ENCODE measurements at regions of chr17 and their contacts with region 1.

Region 1: DNA sequence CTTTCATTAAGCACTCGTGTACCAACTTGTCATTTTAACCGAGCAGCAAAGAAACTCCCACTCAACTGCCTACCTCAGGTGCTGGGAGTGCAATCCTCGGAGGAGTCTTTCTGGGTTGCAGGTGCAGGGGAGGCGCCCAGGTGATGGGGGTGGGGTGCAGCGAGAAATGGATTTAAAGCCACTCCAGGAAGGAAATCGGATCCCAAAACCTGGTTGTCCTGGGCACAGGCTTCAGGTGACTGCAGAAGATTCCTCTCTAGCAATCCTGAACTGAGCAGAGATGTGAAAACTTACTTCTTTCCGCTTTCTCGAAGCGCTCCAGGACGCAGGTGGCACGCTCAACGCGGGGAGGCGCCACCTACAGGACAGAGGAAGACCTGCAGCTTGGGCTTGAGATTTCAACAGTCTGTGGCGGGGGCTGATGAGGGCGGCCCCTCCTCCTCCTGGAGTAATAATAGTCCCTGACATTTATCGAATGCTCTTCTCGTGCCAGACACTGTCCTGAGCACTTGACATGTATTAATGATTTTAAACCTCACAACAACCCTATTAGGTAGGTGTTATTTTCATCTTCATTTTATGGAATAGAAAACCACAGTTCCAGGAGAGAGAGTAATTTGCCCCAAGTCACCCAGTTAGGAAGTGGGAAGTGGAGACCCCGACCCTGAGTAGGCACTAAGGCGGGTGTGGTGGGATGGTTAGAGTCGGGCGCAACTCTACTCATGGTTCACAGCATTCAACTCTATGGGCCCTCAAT is 27.2 kb upstream of the SKAP1 start:
- DNase-seq: peak; percentile 69
- H3K4me3 Mint-ChIP-seq: peak overlapping the region; percentile 28
- H3K27ac Mint-ChIP-seq: peak overlapping the region; percentile 11
- H3K4me1 Mint-ChIP-seq: peaks cover 69% of the 10 kb centered on the region
- H3K27me3 Mint-ChIP-seq: no peaks in the 10 kb centered on the region

Region 2: DNA sequence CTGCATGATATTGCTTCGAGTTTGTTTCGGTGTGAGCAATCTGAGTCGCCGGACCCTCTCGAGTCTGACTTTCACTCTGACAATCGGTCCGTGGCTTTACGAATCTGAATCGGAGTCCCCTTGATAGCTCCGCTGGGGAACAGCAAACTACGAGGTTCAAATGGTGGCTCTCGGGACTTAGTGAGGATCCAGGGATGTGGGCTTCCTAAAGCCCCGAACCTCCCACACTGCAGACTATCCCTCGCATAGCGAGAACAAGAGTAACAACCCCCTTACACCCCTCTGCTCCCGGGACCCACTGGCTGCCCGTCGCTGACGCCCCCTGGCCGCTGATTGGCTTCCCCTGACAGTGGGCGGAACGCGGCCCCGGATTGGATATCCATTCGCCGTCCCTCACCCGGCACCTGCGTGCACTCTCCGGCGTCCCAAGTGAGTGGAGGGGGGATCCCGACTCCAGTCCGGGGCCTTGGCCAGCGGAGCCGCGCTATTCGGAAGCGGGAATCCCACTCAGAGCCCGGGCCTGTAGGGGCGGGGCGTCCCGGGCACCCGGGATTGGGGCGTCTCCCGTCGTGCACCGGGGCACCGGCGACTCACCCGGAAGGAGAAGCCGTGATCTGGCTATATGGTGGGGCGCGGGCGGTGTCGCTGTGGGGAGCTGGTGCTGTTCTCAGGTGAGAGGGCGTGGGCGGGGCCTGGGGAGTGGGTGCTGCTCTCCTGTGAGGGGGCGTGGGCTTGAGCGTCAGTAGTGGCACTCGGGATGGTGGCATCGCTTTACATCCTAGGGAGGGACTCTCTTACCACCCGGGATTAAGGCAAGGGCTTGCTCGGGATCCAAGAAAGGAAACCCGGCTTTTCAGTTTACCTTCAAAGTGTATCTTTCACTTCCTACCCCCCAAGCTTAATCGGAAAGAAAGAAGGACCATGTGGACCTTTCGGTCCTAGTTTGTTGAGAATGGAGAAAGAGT is 349.8 kb before region 1 on chr17 and contains the start of gene SNX11:
- intact Hi-C with region 1: loop called (anchors 10 kb)
- DNase-seq: peak; percentile 91
- H3K4me3 Mint-ChIP-seq: peak within 1 kb of the TSS; percentile 100
- H3K27ac Mint-ChIP-seq: peak within 1 kb of the TSS; percentile 99
- H3K4me1 Mint-ChIP-seq: peaks cover 63% of the 10 kb centered on the region
- H3K27me3 Mint-ChIP-seq: no peaks in the 10 kb centered on the region
- total RNA-seq, gene SNX11: 31.1 and 37.1 TPM in 2 replicates

Region 3: GRCh38 chr17:48330386-48330785 is 126.9 kb before region 1 on chr17:
- intact Hi-C with region 1: no loop called
- DNase-seq: no peak
- H3K4me3 Mint-ChIP-seq: no peak overlapping the region
- H3K27ac Mint-ChIP-seq: no peak overlapping the region
- H3K4me1 Mint-ChIP-seq: peaks cover 23% of the 10 kb centered on the region
- H3K27me3 Mint-ChIP-seq: no peaks in the 10 kb centered on the region

Region 4: GRCh38 chr17:48351831-48352332 is 105.4 kb before region 1 on chr17:
- intact Hi-C with region 1: loop called (anchors 1 kb)
- DNase-seq: no peak
- H3K4me3 Mint-ChIP-seq: no peak overlapping the region
- H3K27ac Mint-ChIP-seq: no peak overlapping the region
- H3K4me1 Mint-ChIP-seq: peaks cover 7% of the 10 kb centered on the region
- H3K27me3 Mint-ChIP-seq: no peaks in the 10 kb centered on the region

Region 5: GRCh38 chr17:48429638-48430586 is 27.3 kb before region 1 on chr17 and contains the start of gene SKAP1:
- intact Hi-C with region 1: loop called (anchors 1 kb)
- DNase-seq: peak; percentile 68
- H3K4me3 Mint-ChIP-seq: peak within 1 kb of the TSS; percentile 98
- H3K27ac Mint-ChIP-seq: peak within 1 kb of the TSS; percentile 99
- H3K4me1 Mint-ChIP-seq: peaks cover 72% of the 10 kb centered on the region
- H3K27me3 Mint-ChIP-seq: peaks cover 1% of the 10 kb centered on the region
- total RNA-seq, gene SKAP1: 48.7 and 51.9 TPM in 2 replicates

Region 6: GRCh38 chr17:48483471-48484131 is 26.3 kb after region 1 on chr17:
- intact Hi-C with region 1: loop called (anchors 2 kb)
- DNase-seq: peak; percentile 40
- H3K4me3 Mint-ChIP-seq: peak overlapping the region; percentile 37
- H3K27ac Mint-ChIP-seq: peak overlapping the region; percentile 70
- H3K4me1 Mint-ChIP-seq: peaks cover 46% of the 10 kb centered on the region
- H3K27me3 Mint-ChIP-seq: no peaks in the 10 kb centered on the region

Region 7: DNA sequence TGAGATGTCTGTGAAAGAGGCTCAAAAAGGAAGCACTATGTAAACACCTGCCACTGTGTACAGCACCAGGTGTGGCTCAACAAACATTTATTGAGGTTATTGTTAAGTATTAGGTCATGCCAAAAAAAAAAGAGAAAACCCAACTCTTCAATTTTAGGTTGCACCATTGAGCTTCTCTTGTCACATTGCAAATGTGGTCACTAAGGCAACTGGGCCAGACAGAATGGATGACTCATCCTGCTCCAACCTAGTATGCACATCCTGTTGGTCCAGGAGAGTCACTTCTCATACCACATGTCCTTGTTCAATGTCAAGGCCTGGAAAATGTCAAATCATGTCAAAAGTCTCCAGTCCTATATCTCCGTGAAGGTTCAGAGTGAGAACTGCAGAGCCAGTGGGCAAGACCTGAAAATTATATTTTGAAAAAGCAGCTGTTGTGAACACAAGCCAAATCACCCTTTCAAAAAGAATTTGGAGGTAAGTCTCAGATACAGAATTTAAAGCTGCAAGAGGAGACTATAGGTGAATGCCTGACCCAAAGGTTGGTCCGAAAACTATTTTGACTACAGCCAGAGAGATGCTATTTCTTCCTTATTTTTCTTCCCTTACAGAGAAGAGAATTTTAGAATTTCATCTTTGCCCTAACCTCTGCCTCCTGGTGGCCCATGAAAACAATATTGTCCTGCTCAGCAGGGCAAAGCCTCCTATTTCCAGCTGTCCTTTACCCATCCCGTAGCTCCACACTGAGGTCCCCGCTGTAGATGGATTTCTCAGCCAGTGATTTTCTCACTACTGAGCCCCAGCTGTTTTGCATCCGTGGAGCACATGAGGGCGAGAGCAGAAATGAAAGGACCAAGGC is 48.8 kb after region 1 on chr17:
- intact Hi-C with region 1: loop called (anchors 2 kb)
- DNase-seq: peak; percentile 70
- H3K4me3 Mint-ChIP-seq: peak overlapping the region; percentile 60
- H3K27ac Mint-ChIP-seq: peak overlapping the region; percentile 84
- H3K4me1 Mint-ChIP-seq: peaks cover 49% of the 10 kb centered on the region
- H3K27me3 Mint-ChIP-seq: peaks cover 8% of the 10 kb centered on the region

Region 8: GRCh38 chr17:48830840-48831548 is 373.7 kb after region 1 on chr17 and contains the start of gene CALCOCO2:
- intact Hi-C with region 1: no loop called
- DNase-seq: peak; percentile 85
- H3K4me3 Mint-ChIP-seq: peak within 1 kb of the TSS; percentile 93
- H3K27ac Mint-ChIP-seq: peak within 1 kb of the TSS; percentile 97
- H3K4me1 Mint-ChIP-seq: peaks cover 50% of the 10 kb centered on the region
- H3K27me3 Mint-ChIP-seq: peaks cover 12% of the 10 kb centered on the region
- total RNA-seq, gene CALCOCO2: 50.3 and 57.9 TPM in 2 replicates

Measured in activated T-helper 1 cell treated with anti-CD3 and anti-CD28 coated beads, Interleukin-12 subunit alpha, Interleukin-12 subunit beta, Interleukin-2, Interleukin-4 antibody, amounts not matched to agents 30 ng/mL and 10 ng/mL and 1 ng/mL, durations not matched to agents 14 hours and 24 hours and 36 hours (primary cell).